Colonic mucosa (tissue), 4 donors: ENCODE measurements at regions of chr22 and their contacts with region 1.

Region 1: GRCh38 chr22:22884010-22884887 is 3.4 kb upstream of the IGLL5 start:
- DNase-seq: peak; percentile 81
- H3K4me3 ChIP-seq: no peak overlapping the region
- H3K27ac ChIP-seq: no peak overlapping the region
- H3K4me1 ChIP-seq: no peaks in the 10 kb centered on the region
- H3K27me3 ChIP-seq: no peaks in the 10 kb centered on the region
- CTCF ChIP-seq: peak; percentile 74

Region 2: DNA sequence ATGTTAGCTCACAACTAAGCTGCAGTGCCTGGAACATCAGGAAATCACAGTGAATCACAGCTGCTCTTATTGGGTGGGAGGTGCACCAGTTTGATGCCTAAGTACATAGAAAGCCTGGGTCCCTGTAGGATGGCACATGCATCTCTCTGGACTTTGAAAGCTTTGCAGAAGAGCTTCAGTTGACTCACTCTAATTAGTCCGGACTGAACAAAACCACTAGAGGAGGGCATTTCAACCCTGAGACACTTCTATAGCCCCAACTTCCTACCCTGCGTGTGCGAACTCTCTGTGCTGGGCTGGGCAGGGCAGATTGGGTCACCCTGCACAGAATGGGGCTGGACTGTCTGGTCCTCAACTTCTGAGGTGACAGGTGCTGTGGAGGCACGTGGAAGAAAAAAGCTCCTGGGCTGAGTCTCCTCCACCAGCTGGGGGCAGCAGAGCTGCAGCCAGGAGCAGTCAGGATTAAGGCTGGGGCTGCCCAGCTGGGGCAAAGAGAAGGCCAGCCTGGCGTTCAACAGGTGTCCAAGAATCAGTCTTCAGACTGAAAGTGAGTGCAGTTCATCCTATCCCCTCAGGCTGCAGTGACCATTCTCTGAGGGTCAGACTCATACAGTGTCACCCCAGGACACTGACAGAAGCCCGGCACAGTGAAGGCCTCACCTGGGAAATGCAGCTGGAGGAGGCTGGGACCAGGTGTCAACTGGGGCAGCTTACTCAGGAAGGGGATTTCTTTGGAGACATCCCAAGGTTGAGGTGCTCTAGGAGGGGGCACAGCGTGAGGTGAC is 217.8 kb before region 1 on chr22:
- intact Hi-C with region 1: no loop called
- DNase-seq: peak; percentile 27
- H3K4me3 ChIP-seq: no peak overlapping the region
- H3K27ac ChIP-seq: no peak overlapping the region
- H3K4me1 ChIP-seq: no peaks in the 10 kb centered on the region
- H3K27me3 ChIP-seq: no peaks in the 10 kb centered on the region
- CTCF ChIP-seq: peak; percentile 50

Region 3: DNA sequence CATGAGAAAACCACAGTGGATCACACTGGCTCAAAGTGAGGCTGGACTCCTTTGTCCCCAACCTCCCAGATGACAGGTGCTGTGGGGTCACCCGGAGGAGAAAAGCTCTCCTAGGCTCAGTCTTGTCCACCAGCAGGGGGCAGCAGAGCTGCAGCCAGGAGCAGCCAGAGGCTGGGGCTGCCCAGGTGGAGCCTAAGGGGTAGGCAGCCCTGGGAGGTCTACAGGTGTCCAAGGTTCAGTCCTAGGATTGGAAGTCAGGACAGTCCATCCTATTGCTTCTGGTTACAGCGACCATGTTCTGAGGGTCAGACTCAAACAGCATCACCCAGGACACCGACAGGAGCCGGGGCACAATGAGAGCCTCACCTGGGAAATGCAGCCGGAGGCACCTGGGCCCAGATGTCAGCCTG is 74.2 kb before region 1 on chr22:
- intact Hi-C with region 1: loop called (anchors 5 kb)
- DNase-seq: no peak
- H3K4me3 ChIP-seq: no peak overlapping the region
- H3K27ac ChIP-seq: no peak overlapping the region
- H3K4me1 ChIP-seq: no peaks in the 10 kb centered on the region
- H3K27me3 ChIP-seq: no peaks in the 10 kb centered on the region
- CTCF ChIP-seq: peak; percentile 84

Region 4: GRCh38 chr22:22942511-22943329 is 58.5 kb after region 1 on chr22:
- intact Hi-C with region 1: no loop called
- DNase-seq: peak; percentile 73
- H3K4me3 ChIP-seq: no peak overlapping the region
- H3K27ac ChIP-seq: no peak overlapping the region
- H3K4me1 ChIP-seq: no peaks in the 10 kb centered on the region
- H3K27me3 ChIP-seq: no peaks in the 10 kb centered on the region
- CTCF ChIP-seq: peak; percentile 57